Left cardiac atrium (tissue), 4 donors: ENCODE measurements at regions of chr20 and their contacts with region 1.

Region 1: GRCh38 chr20:39270837-39271604 is 308.9 kb downstream of the DHX35 start:
- DNase-seq: peak; percentile 33
- ATAC-seq: peak in 1 of 2 donors; percentile 9

Region 2: DNA sequence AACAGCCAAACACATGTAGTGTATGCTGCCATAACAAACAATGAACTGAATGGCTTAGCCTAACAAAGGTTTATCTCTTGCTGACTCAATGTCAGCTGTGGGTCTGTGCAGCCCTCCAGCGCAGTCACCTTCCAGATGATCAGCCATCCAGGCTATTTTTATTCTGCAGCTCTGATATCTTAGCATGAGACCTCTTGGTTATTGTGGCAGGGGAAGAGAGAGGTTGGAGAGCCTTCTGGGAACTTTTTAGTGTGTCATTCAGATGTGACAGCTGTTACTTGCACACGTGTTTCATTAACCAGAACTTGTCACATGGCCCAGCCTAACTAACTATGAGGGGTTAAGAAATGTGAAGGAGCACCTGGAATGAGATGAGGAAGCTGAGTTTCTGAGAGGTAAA is 106.4 kb before region 1 on chr20:
- intact Hi-C with region 1: no loop called
- DNase-seq: no peak
- ATAC-seq: peak in 1 of 2 donors; percentile 77

Region 3: DNA sequence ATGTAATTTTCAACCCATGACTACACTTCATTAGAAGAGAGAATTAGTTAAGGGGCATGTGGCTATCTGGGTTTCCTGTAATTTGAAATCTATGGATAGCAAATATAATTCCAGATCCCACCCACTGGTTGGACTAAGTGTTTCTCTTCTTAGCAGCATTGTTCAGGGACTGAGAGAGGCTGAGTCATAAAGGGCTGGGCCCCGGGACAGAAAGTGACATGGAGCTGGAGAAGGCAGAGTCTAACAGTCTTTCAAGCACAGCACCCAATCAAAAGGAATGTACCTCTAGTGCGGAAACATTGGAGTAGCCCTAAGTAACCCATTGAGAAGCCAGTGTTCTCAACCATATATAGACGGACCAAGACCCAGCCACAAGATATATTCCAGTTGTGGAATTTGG is 55.0 kb after region 1 on chr20:
- intact Hi-C with region 1: no loop called
- DNase-seq: no peak
- ATAC-seq: no peak

Region 4: DNA sequence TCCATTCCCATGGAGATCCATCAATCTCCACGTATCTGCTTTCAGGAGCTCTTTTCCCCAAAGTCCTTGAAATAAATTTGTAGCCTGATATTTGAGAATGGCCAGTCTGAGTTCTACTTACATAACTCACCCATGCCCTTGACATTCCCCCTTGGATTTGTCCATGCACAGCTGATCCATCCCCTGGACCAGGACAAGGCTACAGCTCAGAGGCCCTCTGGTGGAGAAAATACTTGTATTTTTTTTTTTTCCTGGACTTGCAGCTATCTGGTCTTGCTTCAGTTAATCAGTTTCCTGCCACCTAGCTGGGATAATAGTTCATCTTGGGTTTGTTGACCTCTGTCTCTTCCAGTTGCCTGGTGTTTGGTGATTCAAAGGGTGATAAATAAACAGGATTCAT is 158.7 kb after region 1 on chr20:
- intact Hi-C with region 1: loop called in 1 of 2 experiments (anchors 5 kb)
- DNase-seq: no peak
- ATAC-seq: peak in 1 of 2 donors; percentile 47